HEK293 (cell line): ENCODE measurements at regions of chr12 and their contacts with region 1.

Region 1: DNA sequence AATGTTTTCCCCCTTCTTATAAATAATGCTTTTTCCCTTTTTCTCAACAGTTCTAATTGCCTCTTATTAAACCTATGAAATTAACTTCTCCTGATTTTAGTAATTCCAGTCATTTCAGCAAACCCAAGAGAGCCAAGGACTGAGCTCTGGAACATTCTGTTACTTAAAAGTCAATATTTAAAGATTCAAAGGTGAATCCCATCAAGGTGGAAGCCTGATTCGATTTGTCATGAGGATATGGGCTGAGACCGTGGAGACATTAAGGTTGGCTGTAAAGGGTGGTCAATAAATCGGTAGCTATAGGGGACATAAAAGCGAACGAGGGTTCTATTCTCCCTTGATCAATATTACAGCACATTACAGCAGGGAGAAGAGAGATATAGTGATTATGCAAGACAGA is 66.6 kb upstream of the NELL2 start:
- H3K4me3 ChIP-seq: no peak overlapping the region
- H3K27ac ChIP-seq: no peak overlapping the region
- H3K4me1 ChIP-seq: no peaks in the 10 kb centered on the region
- CTCF ChIP-seq: no peak

Region 2: GRCh38 chr12:44921736-44922135 is 21.0 kb before region 1 on chr12:
- CTCF ChIA-PET with region 1: interaction called, 11 read pairs
- POLR2A ChIA-PET with region 1: no interaction called
- H3K4me3 ChIP-seq: no peak overlapping the region
- H3K27ac ChIP-seq: no peak overlapping the region
- H3K4me1 ChIP-seq: no peaks in the 10 kb centered on the region
- CTCF ChIP-seq: no peak

Region 3: GRCh38 chr12:44960856-44961255 is 18.1 kb after region 1 on chr12:
- CTCF ChIA-PET with region 1: interaction called, 27 read pairs
- POLR2A ChIA-PET with region 1: no interaction called
- H3K4me3 ChIP-seq: no peak overlapping the region
- H3K27ac ChIP-seq: no peak overlapping the region
- H3K4me1 ChIP-seq: no peaks in the 10 kb centered on the region
- CTCF ChIP-seq: no peak